ENCODE measurements at regions of chrX and their contacts with region 1.

Region 1: DNA sequence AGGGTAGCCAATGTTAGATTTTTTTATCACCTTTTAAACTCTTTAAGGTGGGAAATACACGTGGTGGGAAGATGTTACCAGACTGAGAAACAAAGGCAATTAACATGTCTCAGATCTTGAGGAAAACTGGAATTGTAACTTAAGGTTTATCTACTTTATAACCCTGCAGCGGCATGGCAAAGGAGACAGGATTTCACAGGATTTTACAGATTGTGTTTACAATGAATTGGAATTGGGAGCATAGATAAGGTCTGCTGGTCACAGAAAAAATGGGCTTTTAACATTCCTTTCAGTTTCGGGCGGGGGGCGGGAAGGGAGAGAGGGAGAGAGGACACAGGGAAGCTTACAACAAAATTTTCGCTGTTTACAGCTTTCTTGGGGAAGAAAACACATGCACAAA is 467.5 kb upstream of the CT83 start:
- DNase-seq: no peak
- ATAC-seq: no peak
- H3K4me3 ChIP-seq: no peak overlapping the region
- H3K27ac ChIP-seq: no peak overlapping the region
- H3K4me1 ChIP-seq: no peaks in the 10 kb centered on the region
- H3K27me3 ChIP-seq: no peaks in the 10 kb centered on the region
- CTCF ChIP-seq: no peak
- EP300 ChIP-seq: no peak
- POLR2A ChIP-seq: no peak
- RAD21 ChIP-seq: no peak

Region 2: DNA sequence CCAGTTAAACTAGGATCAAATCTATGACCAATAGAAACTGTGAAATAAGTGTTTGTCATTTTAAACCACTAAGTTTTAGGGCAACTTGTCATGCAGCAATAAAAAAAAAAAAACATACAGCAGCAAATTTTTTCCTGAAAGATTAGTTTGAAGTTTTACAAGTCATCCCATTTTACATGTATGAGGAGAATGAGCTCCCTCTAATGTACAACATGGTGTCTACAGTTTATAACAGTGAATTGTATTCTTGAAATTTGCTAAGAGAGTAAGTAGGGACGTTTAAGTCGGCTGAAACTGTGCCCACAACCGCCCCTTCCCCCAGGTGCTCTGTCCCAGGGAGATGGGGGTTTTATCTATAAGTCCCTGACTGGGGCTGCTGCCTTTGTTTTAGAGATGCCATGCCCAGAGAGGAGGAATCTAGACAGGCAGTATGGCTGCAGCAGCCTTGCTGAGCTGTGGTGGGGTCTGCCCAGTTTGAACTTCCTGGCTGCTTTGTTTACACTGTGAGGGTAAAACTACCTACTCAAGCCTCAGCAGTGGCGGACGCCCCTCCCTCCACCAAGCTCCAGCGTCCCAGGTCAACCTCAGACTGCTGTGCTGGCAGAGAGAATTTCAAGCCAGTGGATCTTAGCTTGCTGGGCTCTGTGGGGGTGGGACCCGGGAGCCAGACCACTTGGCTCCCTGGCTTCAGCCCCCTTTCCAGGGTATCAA is 31.7 kb after region 1 on chrX:
- CTCF ChIA-PET with region 1: no interaction called
- POLR2A ChIA-PET with region 1: no interaction called
- RAD21 ChIA-PET with region 1: interaction called, 14 read pairs
- SMC1A ChIA-PET with region 1: interaction called, 5 read pairs
- in situ Hi-C with region 1: no loop called
- intact Hi-C with region 1: no loop called
- DNase-seq: no peak
- ATAC-seq: no peak
- H3K4me3 ChIP-seq: no peak overlapping the region
- H3K27ac ChIP-seq: no peak overlapping the region
- H3K4me1 ChIP-seq: no peaks in the 10 kb centered on the region
- H3K27me3 ChIP-seq: no peaks in the 10 kb centered on the region
- CTCF ChIP-seq: no peak; a peak in 1 of 6 replicates
- EP300 ChIP-seq: no peak
- POLR2A ChIP-seq: no peak
- RAD21 ChIP-seq: no peak

Region 3: GRCh38 chrX:118038614-118039365 is 1108.5 kb after region 1 on chrX:
- CTCF ChIA-PET with region 1: no interaction called
- POLR2A ChIA-PET with region 1: no interaction called
- RAD21 ChIA-PET with region 1: no interaction called
- SMC1A ChIA-PET with region 1: no interaction called
- in situ Hi-C with region 1: no loop called
- intact Hi-C with region 1: no loop called
- DNase-seq: no peak
- ATAC-seq: no peak
- H3K4me3 ChIP-seq: no peak overlapping the region
- H3K27ac ChIP-seq: no peak overlapping the region
- H3K4me1 ChIP-seq: no peaks in the 10 kb centered on the region
- H3K27me3 ChIP-seq: no peaks in the 10 kb centered on the region
- CTCF ChIP-seq: no peak
- EP300 ChIP-seq: no peak
- POLR2A ChIP-seq: no peak
- RAD21 ChIP-seq: no peak

Measured in GM12878 (cell line).